CD4-positive, alpha-beta T cell (primary cell): ENCODE measurements at regions of chr2 and their contacts with region 1.

Region 1: GRCh38 chr2:203751685-203752271 is 45.3 kb downstream of the CD28 start:
- DNase-seq: no peak
- ATAC-seq: no peak
- H3K4me3 ChIP-seq: no peak overlapping the region
- H3K4me3 Mint-ChIP-seq: no peak overlapping the region
- H3K27ac ChIP-seq: no peak overlapping the region
- H3K27ac Mint-ChIP-seq: peak overlapping the region; percentile 46
- H3K4me1 ChIP-seq: peaks cover 34% of the 10 kb centered on the region
- H3K4me1 Mint-ChIP-seq: peaks cover 71% of the 10 kb centered on the region
- H3K27me3 ChIP-seq: no peaks in the 10 kb centered on the region
- H3K27me3 Mint-ChIP-seq: no peaks in the 10 kb centered on the region
- CTCF ChIP-seq: no peak

Region 2: GRCh38 chr2:202555356-202555755 is 1196.4 kb before region 1 on chr2:
- CTCF ChIA-PET with region 1: no interaction called
- POLR2A ChIA-PET with region 1: no interaction called
- intact Hi-C with region 1: no loop called
- DNase-seq: no peak
- ATAC-seq: no peak
- H3K4me3 ChIP-seq: no peak overlapping the region
- H3K4me3 Mint-ChIP-seq: no peak overlapping the region
- H3K27ac ChIP-seq: no peak overlapping the region
- H3K27ac Mint-ChIP-seq: no peak overlapping the region
- H3K4me1 ChIP-seq: no peaks in the 10 kb centered on the region
- H3K4me1 Mint-ChIP-seq: no peaks in the 10 kb centered on the region
- H3K27me3 ChIP-seq: no peaks in the 10 kb centered on the region
- H3K27me3 Mint-ChIP-seq: no peaks in the 10 kb centered on the region
- CTCF ChIP-seq: no peak

Region 3: GRCh38 chr2:203730076-203730729 is 21.6 kb before region 1 on chr2:
- CTCF ChIA-PET with region 1: interaction called, 3 read pairs
- POLR2A ChIA-PET with region 1: interaction called, 40 read pairs
- intact Hi-C with region 1: no loop called
- DNase-seq: no peak
- ATAC-seq: peak; percentile 62
- H3K4me3 ChIP-seq: no peak overlapping the region
- H3K4me3 Mint-ChIP-seq: peak overlapping the region; percentile 75
- H3K27ac ChIP-seq: peak overlapping the region; percentile 25 to 26
- H3K27ac Mint-ChIP-seq: peak overlapping the region; percentile 87
- H3K4me1 ChIP-seq: peaks cover 61% of the 10 kb centered on the region
- H3K4me1 Mint-ChIP-seq: peaks cover 95% of the 10 kb centered on the region
- H3K27me3 ChIP-seq: no peaks in the 10 kb centered on the region
- H3K27me3 Mint-ChIP-seq: no peaks in the 10 kb centered on the region
- CTCF ChIP-seq: no peak

Region 4: GRCh38 chr2:203774760-203775159 is 23.0 kb after region 1 on chr2:
- CTCF ChIA-PET with region 1: no interaction called
- POLR2A ChIA-PET with region 1: interaction called, 3 read pairs
- intact Hi-C with region 1: loop called in 1 of 2 experiments (anchors 2 kb)
- DNase-seq: no peak
- ATAC-seq: no peak
- H3K4me3 ChIP-seq: no peak overlapping the region
- H3K4me3 Mint-ChIP-seq: no peak overlapping the region
- H3K27ac ChIP-seq: no peak overlapping the region
- H3K27ac Mint-ChIP-seq: no peak overlapping the region
- H3K4me1 ChIP-seq: no peaks in the 10 kb centered on the region
- H3K4me1 Mint-ChIP-seq: peaks cover 39% of the 10 kb centered on the region
- H3K27me3 ChIP-seq: no peaks in the 10 kb centered on the region
- H3K27me3 Mint-ChIP-seq: no peaks in the 10 kb centered on the region
- CTCF ChIP-seq: no peak

Region 5: GRCh38 chr2:204234879-204235278 is 483.1 kb after region 1 on chr2:
- CTCF ChIA-PET with region 1: no interaction called
- POLR2A ChIA-PET with region 1: no interaction called
- intact Hi-C with region 1: no loop called
- DNase-seq: no peak
- ATAC-seq: no peak
- H3K4me3 ChIP-seq: no peak overlapping the region
- H3K4me3 Mint-ChIP-seq: no peak overlapping the region
- H3K27ac ChIP-seq: no peak overlapping the region
- H3K27ac Mint-ChIP-seq: no peak overlapping the region
- H3K4me1 ChIP-seq: no peaks in the 10 kb centered on the region
- H3K4me1 Mint-ChIP-seq: no peaks in the 10 kb centered on the region
- H3K27me3 ChIP-seq: no peaks in the 10 kb centered on the region
- H3K27me3 Mint-ChIP-seq: no peaks in the 10 kb centered on the region
- CTCF ChIP-seq: no peak